ENCODE measurements at regions of chr10 and their contacts with region 1.

Region 1: DNA sequence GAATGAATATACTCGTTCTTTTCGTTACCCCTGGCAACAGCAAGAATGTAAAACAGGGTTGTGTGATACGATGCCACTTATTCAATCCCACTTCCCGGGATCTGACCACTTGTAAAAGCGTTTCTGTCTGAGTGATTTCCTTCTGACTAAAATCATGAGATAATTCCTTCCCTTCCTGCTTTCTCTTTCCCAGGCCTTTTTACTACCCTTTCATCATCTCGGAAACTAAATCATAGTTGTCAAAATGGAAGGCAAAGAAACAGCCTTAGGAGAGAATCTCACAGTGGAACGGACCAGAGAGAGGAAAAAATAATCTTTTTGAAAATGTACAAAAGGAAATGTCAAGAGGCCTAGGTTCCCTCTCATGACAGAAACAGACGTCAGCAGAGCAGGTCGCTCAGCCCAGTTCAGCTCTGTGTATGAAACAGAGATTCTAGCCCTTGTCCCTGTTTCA is 29.8 kb downstream of the DIP2C start:
- DNase-seq: no peak
- H3K4me3 ChIP-seq: no peak overlapping the region
- H3K27ac ChIP-seq: no peak overlapping the region
- H3K4me1 ChIP-seq: no peaks in the 10 kb centered on the region
- H3K27me3 ChIP-seq: no peaks in the 10 kb centered on the region
- CTCF ChIP-seq: no peak
- POLR2A ChIP-seq: no peak

Region 2: GRCh38 chr10:167383-167782 is 492.3 kb before region 1 on chr10:
- intact Hi-C with region 1: no loop called
- DNase-seq: no peak
- H3K4me3 ChIP-seq: no peak overlapping the region
- H3K27ac ChIP-seq: no peak overlapping the region
- H3K4me1 ChIP-seq: no peaks in the 10 kb centered on the region
- H3K27me3 ChIP-seq: no peaks in the 10 kb centered on the region
- CTCF ChIP-seq: no peak
- POLR2A ChIP-seq: no peak

Region 3: GRCh38 chr10:404346-404745 is 255.4 kb before region 1 on chr10:
- intact Hi-C with region 1: loop called (anchors 5 kb)
- DNase-seq: no peak
- H3K4me3 ChIP-seq: no peak overlapping the region
- H3K27ac ChIP-seq: no peak overlapping the region
- H3K4me1 ChIP-seq: no peaks in the 10 kb centered on the region
- H3K27me3 ChIP-seq: no peaks in the 10 kb centered on the region
- CTCF ChIP-seq: no peak
- POLR2A ChIP-seq: no peak

Region 4: DNA sequence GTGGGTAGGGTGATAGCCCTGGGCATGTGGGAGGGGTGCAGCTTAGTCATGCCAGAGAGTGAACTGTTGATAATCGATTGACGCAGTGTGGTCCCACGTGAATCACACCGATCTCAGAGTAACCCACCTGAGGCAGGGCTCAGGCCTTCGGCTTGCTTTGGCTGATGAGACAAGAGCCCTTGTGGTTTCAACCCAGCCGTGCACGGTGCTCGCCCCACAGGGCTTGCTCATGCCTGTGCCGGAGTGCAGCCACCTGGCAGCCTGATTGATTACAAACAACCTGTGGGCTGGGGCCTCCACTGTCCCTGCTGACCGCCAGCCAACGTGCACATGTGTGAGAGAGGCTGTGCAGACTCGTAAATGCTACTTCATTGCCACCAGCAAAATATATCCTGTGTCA is 1222.5 kb after region 1 on chr10:
- intact Hi-C with region 1: no loop called
- DNase-seq: no peak
- H3K4me3 ChIP-seq: no peak overlapping the region
- H3K27ac ChIP-seq: no peak overlapping the region
- H3K4me1 ChIP-seq: no peaks in the 10 kb centered on the region
- H3K27me3 ChIP-seq: peaks cover 0 to 5% of the 10 kb centered on the region in 2 donors
- CTCF ChIP-seq: no peak
- POLR2A ChIP-seq: no peak